Heart left ventricle (tissue), 16 donors: ENCODE measurements at regions of chr18 and their contacts with region 1.

Region 1: GRCh38 chr18:22385718-22386117 is 32.0 kb downstream of the CTAGE1 start:
- DNase-seq: no peak
- ATAC-seq: peak in 1 of 4 donors; percentile 33
- H3K4me3 ChIP-seq: no peak overlapping the region
- H3K27ac ChIP-seq: no peak overlapping the region
- H3K4me1 ChIP-seq: peaks cover 0 to 16% (median 5%) of the 10 kb centered on the region in 12 donors
- H3K27me3 ChIP-seq: no peaks in the 10 kb centered on the region
- CTCF ChIP-seq: no peak
- POLR2A ChIP-seq: no peak

Region 2: DNA sequence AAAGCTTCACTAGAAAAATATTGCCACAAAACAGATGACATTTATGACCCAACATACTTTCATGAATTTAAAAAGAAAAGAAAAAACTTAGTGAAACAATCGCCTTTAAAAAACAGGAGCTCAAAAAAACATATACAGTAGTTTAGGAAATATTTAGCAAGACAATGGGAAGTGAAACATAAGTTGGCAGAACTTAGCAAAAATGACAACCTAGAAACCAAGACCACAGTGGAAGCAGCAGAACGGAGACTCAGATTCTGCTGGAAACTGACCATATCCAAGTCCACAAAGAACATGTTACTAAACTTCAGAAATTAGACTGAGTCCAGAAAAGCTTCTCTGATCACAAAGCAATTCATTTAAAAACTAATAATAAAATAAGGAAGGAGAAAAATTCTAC is 73.8 kb after region 1 on chr18:
- intact Hi-C with region 1: no loop called
- DNase-seq: no peak
- ATAC-seq: no peak
- H3K4me3 ChIP-seq: no peak overlapping the region
- H3K27ac ChIP-seq: no peak overlapping the region
- H3K4me1 ChIP-seq: peaks cover 0 to 24% (median 12%) of the 10 kb centered on the region in 12 donors
- H3K27me3 ChIP-seq: no peaks in the 10 kb centered on the region
- CTCF ChIP-seq: no peak
- POLR2A ChIP-seq: no peak

Region 3: DNA sequence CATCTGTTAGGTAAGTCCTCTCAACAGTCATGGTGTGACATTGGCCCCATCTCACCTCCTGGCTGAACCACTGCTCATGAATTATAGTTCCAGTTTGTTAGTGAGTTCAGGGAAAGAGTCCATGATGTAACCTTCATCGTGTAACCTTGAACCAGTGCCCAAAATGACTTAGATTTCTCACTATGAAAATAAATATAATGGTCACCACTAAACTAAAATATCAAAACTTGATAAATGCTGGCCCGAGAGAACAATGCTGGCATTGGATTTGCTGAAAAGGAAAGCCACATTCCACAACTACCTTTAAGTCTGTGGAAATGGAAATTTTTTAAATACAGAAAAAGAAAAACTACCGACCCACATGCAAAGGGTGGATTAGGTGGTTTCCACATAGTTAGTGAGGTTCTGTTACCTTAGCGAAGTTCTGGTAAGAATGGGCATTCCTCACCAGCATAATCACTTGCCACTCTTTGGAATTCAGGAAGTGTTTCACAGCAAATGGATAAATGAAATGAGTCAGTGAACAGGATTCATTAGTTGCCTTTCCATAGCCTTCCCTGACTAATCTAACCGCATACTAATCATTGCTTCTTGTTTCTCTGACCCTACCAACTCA is 165.9 kb after region 1 on chr18:
- intact Hi-C with region 1: loop called in 2 of 10 experiments (anchors 5 to 10 kb)
- DNase-seq: no peak
- ATAC-seq: peak in 2 of 4 donors; percentile 36 to 40
- H3K4me3 ChIP-seq: no peak overlapping the region
- H3K27ac ChIP-seq: peak overlapping the region in 4 of 12 donors; percentile 9 to 24 (median 20)
- H3K4me1 ChIP-seq: peaks cover 0 to 36% (median 14%) of the 10 kb centered on the region in 12 donors
- H3K27me3 ChIP-seq: no peaks in the 10 kb centered on the region
- CTCF ChIP-seq: no peak
- POLR2A ChIP-seq: no peak